ENCODE measurements at regions of chr15 and their contacts with region 1.

Region 1: GRCh38 chr15:41283653-41284426 is 48.6 kb downstream of the OIP5 start:
- DNase-seq: peak; percentile 97
- ATAC-seq: peak; percentile 96
- H3K4me3 ChIP-seq: peak overlapping the region; percentile 82 to 93 (median 91)
- H3K27ac ChIP-seq: peak overlapping the region; percentile 86
- H3K4me1 ChIP-seq: peaks cover 76% of the 10 kb centered on the region
- H3K27me3 ChIP-seq: no peaks in the 10 kb centered on the region; a peak in 1 of 5 replicates
- CTCF ChIP-seq: 0 out of 2 replicates have a peak, but pooled peaks have one; percentile 7
- EP300 ChIP-seq: peak in 1 of 2 experiments; percentile 14; a peak in 1 of 4 replicates
- POLR2A ChIP-seq: peak; percentile 85 to 92
- RAD21 ChIP-seq: peak; percentile 54

Region 2: GRCh38 chr15:41230650-41231533 is 52.9 kb before region 1 on chr15 and contains the starts of genes CHP1 and EXD1:
- CTCF ChIA-PET with region 1: no interaction called
- POLR2A ChIA-PET with region 1: interaction called, 10 read pairs
- in situ Hi-C with region 1: no loop called
- intact Hi-C with region 1: loop called (anchors 5 kb)
- DNase-seq: peak; percentile 94
- ATAC-seq: peak; percentile 98
- H3K4me3 ChIP-seq: peak within 1 kb of the TSS; percentile 85 to 91 (median 89)
- H3K27ac ChIP-seq: peak within 1 kb of the TSS; percentile 89
- H3K4me1 ChIP-seq: peaks cover 31% of the 10 kb centered on the region
- H3K27me3 ChIP-seq: no peaks in the 10 kb centered on the region
- CTCF ChIP-seq: peak; percentile 93
- EP300 ChIP-seq: 0 out of 4 replicates have a peak, but pooled peaks of 1 of the 2 experiments have one; percentile 21
- POLR2A ChIP-seq: peak; percentile 86 to 90
- RAD21 ChIP-seq: peak; percentile 58; the same call in 1 of the 2 replicates
- total RNA-seq, gene CHP1: 76.4 and 111 TPM in 2 replicates
- total RNA-seq, gene EXD1: not detected in 2 replicates

Region 3: DNA sequence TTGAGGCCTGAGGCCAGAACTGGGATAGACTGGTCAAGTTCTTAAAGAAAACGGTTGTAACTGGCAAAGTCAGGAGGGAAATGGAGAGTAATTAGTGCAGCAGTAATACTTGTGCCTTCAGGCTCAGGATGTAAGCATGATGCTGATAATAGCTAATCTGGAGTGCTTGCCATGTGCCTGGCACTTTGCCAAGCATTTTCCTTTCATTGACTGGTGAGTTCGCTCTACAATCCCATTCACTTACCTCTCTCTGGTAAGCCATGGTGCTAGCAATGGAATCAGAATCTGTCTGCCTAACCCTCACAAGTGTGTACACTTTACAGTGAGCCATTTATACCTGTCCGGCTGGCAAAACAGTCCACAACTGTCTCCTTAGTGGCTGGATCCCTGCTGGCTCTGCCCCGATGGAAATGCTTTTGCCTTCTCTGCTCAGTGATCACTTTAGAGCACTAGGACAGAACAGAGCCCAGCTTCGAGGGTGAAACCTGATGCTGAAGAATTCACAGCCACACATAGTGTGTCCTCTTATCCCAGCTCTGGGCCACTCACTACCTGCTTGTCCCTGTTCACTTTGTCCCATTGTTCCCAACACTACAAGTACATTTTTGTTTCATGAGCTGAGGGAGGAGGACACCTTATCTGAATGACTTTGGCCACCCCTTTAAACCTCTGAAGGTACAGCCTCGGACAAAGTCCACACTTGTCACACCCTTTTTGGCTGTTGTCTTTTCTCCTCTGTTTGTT is 42.4 kb before region 1 on chr15:
- CTCF ChIA-PET with region 1: no interaction called
- POLR2A ChIA-PET with region 1: interaction called, 11 read pairs
- in situ Hi-C with region 1: no loop called
- intact Hi-C with region 1: no loop called
- DNase-seq: peak; percentile 91
- ATAC-seq: peak; percentile 89
- H3K4me3 ChIP-seq: peak overlapping the region in 1 of 3 experiments; percentile 17; a peak in 1 of 6 replicates
- H3K27ac ChIP-seq: peak overlapping the region; percentile 80
- H3K4me1 ChIP-seq: peaks cover 40% of the 10 kb centered on the region
- H3K27me3 ChIP-seq: no peaks in the 10 kb centered on the region
- CTCF ChIP-seq: no peak
- EP300 ChIP-seq: peak in 1 of 2 experiments; percentile 72; a peak in 1 of 4 replicates
- POLR2A ChIP-seq: no peak
- RAD21 ChIP-seq: no peak

Region 4: GRCh38 chr15:41258706-41259471 is 25.0 kb before region 1 on chr15:
- CTCF ChIA-PET with region 1: no interaction called
- POLR2A ChIA-PET with region 1: interaction called, 10 read pairs
- in situ Hi-C with region 1: no loop called
- intact Hi-C with region 1: no loop called
- DNase-seq: peak; percentile 40
- ATAC-seq: peak; percentile 64
- H3K4me3 ChIP-seq: no peak overlapping the region
- H3K27ac ChIP-seq: peak overlapping the region; percentile 76
- H3K4me1 ChIP-seq: peaks cover 83% of the 10 kb centered on the region
- H3K27me3 ChIP-seq: no peaks in the 10 kb centered on the region
- CTCF ChIP-seq: no peak
- EP300 ChIP-seq: peak in 1 of 2 experiments; percentile 43; a peak in 1 of 4 replicates
- POLR2A ChIP-seq: no peak
- RAD21 ChIP-seq: no peak

Region 5: GRCh38 chr15:41331833-41332787 is 48.3 kb after region 1 on chr15 and contains the start of gene OIP5:
- CTCF ChIA-PET with region 1: no interaction called
- POLR2A ChIA-PET with region 1: interaction called, 9 read pairs
- in situ Hi-C with region 1: loop called (anchors 5 kb)
- intact Hi-C with region 1: loop called (anchors 1 kb)
- DNase-seq: peak; percentile 99
- ATAC-seq: peak; percentile 96
- H3K4me3 ChIP-seq: peak within 1 kb of the TSS; percentile 95 to 100 (median 99)
- H3K27ac ChIP-seq: peak within 1 kb of the TSS; percentile 88
- H3K4me1 ChIP-seq: peaks cover 35% of the 10 kb centered on the region
- H3K27me3 ChIP-seq: no peaks in the 10 kb centered on the region; a peak in 1 of 5 replicates
- CTCF ChIP-seq: peak; percentile 81
- EP300 ChIP-seq: no peak; a peak in 1 of 4 replicates
- POLR2A ChIP-seq: peak; percentile 74 to 95
- RAD21 ChIP-seq: peak; percentile 72
- total RNA-seq, gene OIP5: 38.0 and 39.1 TPM in 2 replicates